Activated CD8-positive, alpha-beta T cell treated with anti-CD3 and anti-CD28 coated beads, Interleukin-2, amount 10 ng/mL, durations not matched to agents 7 days and 5 days (primary cell): ENCODE measurements at regions of chr6 and their contacts with region 1.

Region 1: GRCh38 chr6:30600451-30600961 is 16.5 kb downstream of the PPP1R10 start:
- DNase-seq: no peak
- ATAC-seq: no peak
- H3K4me3 Mint-ChIP-seq: no peak overlapping the region
- H3K27ac Mint-ChIP-seq: no peak overlapping the region
- H3K4me1 Mint-ChIP-seq: peaks cover 18% of the 10 kb centered on the region
- H3K27me3 Mint-ChIP-seq: no peaks in the 10 kb centered on the region

Region 2: DNA sequence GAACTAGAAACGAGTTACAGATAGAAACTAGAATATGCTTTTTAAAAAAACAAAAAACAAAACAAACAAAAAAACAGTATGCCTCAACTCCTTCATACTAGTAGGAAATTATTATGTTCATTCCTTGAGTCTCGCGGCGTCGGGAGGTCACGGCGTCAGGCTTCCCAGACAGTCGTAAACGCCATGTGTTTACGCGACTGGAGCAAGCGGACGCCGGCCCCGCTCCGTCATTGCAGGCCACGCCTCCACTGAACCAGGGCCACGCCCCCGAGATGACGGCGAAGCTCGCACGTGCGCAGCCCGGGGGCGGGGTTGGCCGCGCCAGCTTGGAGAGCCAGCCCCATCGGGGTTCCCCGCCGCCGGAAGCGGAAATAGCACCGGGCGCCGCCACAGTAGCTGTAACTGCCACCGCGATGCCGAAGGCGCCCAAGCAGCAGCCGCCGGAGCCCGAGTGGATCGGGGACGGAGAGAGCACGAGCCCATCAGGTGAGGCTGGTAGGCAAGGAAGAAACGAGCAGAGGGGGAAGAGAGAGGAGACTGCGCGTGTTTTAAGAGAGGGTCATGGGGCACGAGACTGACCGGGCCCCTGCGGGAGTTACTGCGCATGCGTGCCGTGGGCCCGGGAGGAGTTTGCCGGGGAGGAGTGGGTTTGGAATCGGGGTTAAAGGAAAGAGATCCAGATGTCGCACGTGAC is 29.3 kb before region 1 on chr6 and contains the start of gene ABCF1:
- CTCF ChIA-PET with region 1: interaction called, 25 read pairs
- POLR2A ChIA-PET with region 1: interaction called, 5 read pairs
- DNase-seq: peak; percentile 99
- ATAC-seq: peak; percentile 96
- H3K4me3 Mint-ChIP-seq: peak within 1 kb of the TSS; percentile 96
- H3K27ac Mint-ChIP-seq: peak within 1 kb of the TSS; percentile 98
- H3K4me1 Mint-ChIP-seq: peaks cover 54% of the 10 kb centered on the region
- H3K27me3 Mint-ChIP-seq: peaks cover 2% of the 10 kb centered on the region
- total RNA-seq, gene ABCF1: 72.2 to 79.6 TPM

Region 3: GRCh38 chr6:30583921-30584320 is 16.6 kb before region 1 on chr6:
- CTCF ChIA-PET with region 1: interaction called, 20 read pairs
- POLR2A ChIA-PET with region 1: interaction called, 8 read pairs
- DNase-seq: no peak
- ATAC-seq: no peak
- H3K4me3 Mint-ChIP-seq: no peak overlapping the region
- H3K27ac Mint-ChIP-seq: no peak overlapping the region
- H3K4me1 Mint-ChIP-seq: no peaks in the 10 kb centered on the region
- H3K27me3 Mint-ChIP-seq: no peaks in the 10 kb centered on the region

Region 4: DNA sequence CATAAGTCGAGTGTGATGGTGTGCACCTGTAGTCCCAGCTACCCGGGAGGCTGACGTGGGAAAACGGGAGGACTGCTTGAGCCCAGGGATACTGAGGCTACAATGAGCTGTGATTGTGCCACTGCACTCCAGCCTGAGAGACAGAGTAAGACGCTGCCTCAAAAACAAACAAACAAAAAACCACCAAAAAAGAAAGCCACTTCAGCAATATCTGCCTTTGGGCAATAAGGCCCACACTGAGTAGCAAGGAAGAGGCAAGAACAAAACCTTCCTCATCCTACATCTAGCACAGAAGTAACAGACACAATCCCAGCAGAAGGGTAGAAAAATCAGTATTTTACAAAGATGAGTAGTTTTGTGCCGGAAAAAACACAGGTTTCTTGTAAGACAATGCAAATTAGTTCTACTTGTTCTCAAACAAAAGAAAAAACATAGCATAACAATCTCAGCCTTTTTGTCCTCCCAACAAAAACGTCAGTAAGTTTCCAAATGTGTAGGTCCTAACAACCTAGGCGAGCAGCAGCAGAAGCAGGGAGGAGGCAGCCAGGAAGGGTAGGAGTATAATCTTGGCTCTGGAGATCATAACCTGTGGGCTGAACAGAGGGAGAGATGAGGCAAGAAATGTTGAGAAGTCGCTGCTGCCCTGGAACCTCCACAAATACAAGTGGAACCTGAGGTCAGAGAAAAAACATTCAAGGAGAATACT is 10.8 kb after region 1 on chr6:
- CTCF ChIA-PET with region 1: interaction called, 30 read pairs
- POLR2A ChIA-PET with region 1: interaction called, 60 read pairs
- DNase-seq: no peak
- ATAC-seq: no peak
- H3K4me3 Mint-ChIP-seq: no peak overlapping the region
- H3K27ac Mint-ChIP-seq: peak overlapping the region; percentile 22
- H3K4me1 Mint-ChIP-seq: peaks cover 64% of the 10 kb centered on the region
- H3K27me3 Mint-ChIP-seq: peaks cover 1% of the 10 kb centered on the region

Region 5: DNA sequence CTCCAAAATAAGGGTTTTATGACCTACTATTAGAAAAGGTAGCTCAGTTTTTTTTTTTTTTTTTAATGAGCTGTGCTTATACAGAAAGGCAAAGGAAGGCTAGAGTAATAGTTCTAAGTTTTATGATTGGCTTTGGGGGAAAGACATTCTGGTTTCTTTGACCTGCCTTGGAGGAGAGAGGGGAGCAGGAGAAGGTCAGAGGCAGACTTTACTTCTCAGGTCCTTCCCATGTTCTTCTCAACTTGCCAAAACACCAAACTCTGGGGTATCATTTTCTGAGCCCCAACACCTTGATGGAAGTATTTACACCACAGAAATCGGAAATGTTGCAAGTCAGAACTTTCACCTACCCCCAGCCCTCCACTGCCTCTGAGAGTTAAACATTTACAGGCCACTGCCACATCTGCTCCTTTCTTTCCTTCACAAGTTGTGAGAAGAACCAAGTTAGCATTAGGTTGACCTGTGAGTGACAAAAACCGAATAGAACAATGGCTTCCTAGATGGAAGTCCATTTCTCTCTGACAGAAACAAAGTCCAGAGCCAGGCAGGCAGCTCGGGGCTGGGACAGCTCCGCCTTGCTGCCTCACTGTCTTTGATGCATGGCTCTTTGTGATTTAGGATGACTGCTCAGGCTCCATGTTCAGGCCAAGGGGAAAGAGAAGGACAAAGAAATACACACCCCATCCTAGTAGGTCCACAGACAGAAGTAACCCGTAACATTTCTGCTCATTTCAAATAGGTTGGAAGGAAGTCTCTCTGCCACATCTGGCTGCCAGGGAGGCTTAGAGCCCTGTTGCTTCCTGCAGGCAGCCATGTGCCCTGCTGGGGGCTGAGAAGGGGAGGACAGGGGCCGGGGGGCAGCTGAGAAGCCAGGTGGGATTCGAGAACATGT is 163.0 kb after region 1 on chr6:
- CTCF ChIA-PET with region 1: no interaction called
- POLR2A ChIA-PET with region 1: no interaction called
- DNase-seq: no peak
- ATAC-seq: peak; percentile 24
- H3K4me3 Mint-ChIP-seq: peak overlapping the region; percentile 6
- H3K27ac Mint-ChIP-seq: peak overlapping the region; percentile 86
- H3K4me1 Mint-ChIP-seq: peaks cover 72% of the 10 kb centered on the region
- H3K27me3 Mint-ChIP-seq: no peaks in the 10 kb centered on the region